ENCODE measurements at regions of chrX and their contacts with region 1.

Region 1: GRCh38 chrX:111151764-111152163 is 55.8 kb downstream of the PAK3 start:
- DNase-seq: no peak
- ATAC-seq: no peak
- H3K4me3 ChIP-seq: no peak overlapping the region
- H3K4me3 Mint-ChIP-seq: no peak overlapping the region
- H3K27ac ChIP-seq: no peak overlapping the region
- H3K27ac Mint-ChIP-seq: no peak overlapping the region
- H3K4me1 ChIP-seq: no peaks in the 10 kb centered on the region
- H3K4me1 Mint-ChIP-seq: no peaks in the 10 kb centered on the region
- H3K27me3 ChIP-seq: no peaks in the 10 kb centered on the region
- H3K27me3 Mint-ChIP-seq: peaks cover 2% of the 10 kb centered on the region
- CTCF ChIP-seq: no peak

Region 2: DNA sequence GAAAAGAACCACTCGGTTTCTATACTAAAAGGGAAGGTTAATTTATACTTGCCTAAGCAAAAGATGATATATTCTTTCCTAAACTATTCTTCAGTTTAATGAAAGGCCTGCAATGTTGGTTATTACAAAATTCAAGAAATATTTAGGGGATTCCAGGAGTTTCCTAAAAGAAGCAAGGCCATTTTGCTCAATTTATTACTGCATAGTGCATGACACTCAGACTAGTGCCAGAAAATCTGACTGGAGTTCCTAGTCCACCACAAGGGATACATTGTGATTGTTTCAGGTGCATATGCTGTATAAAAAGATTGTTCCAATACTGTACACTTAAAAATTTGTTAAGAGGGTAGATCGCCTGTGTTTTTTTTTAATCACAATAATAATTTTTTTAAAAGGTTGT is 39.8 kb after region 1 on chrX:
- CTCF ChIA-PET with region 1: no interaction called
- POLR2A ChIA-PET with region 1: no interaction called
- intact Hi-C with region 1: loop called in 1 of 2 experiments (anchors 1 kb)
- DNase-seq: no peak
- ATAC-seq: no peak
- H3K4me3 ChIP-seq: no peak overlapping the region
- H3K4me3 Mint-ChIP-seq: no peak overlapping the region
- H3K27ac ChIP-seq: no peak overlapping the region
- H3K27ac Mint-ChIP-seq: no peak overlapping the region
- H3K4me1 ChIP-seq: no peaks in the 10 kb centered on the region
- H3K4me1 Mint-ChIP-seq: no peaks in the 10 kb centered on the region
- H3K27me3 ChIP-seq: no peaks in the 10 kb centered on the region
- H3K27me3 Mint-ChIP-seq: no peaks in the 10 kb centered on the region
- CTCF ChIP-seq: no peak

Measured in CD8-positive, alpha-beta T cell (primary cell).